ENCODE measurements at regions of chr4 and their contacts with region 1.

Region 1: GRCh38 chr4:158778156-158778711 is 9.4 kb downstream of the FNIP2 start:
- DNase-seq: no peak
- ATAC-seq: no peak
- H3K4me3 ChIP-seq: no peak overlapping the region
- H3K27ac ChIP-seq: no peak overlapping the region
- H3K4me1 ChIP-seq: peaks cover 58% of the 10 kb centered on the region
- H3K27me3 ChIP-seq: no peaks in the 10 kb centered on the region
- CTCF ChIP-seq: no peak
- POLR2A ChIP-seq: no peak

Region 2: GRCh38 chr4:158821228-158821971 is 43.2 kb after region 1 on chr4:
- intact Hi-C with region 1: loop called (anchors 10 kb)
- DNase-seq: no peak
- ATAC-seq: no peak
- H3K4me3 ChIP-seq: no peak overlapping the region
- H3K27ac ChIP-seq: peak overlapping the region; percentile 34 to 69 (median 56)
- H3K4me1 ChIP-seq: peaks cover 89% of the 10 kb centered on the region
- H3K27me3 ChIP-seq: no peaks in the 10 kb centered on the region
- CTCF ChIP-seq: no peak
- POLR2A ChIP-seq: peak in 1 of 3 donors; percentile 10